ENCODE measurements at regions of chr1 and their contacts with region 1.

Region 1: GRCh38 chr1:64497088-64497883 is 27.4 kb downstream of the CACHD1 start:
- DNase-seq: no peak
- H3K4me3 ChIP-seq: peak overlapping the region in 1 of 4 experiments; percentile 44; a peak in 2 of 8 replicates
- H3K27ac ChIP-seq: peak overlapping the region; percentile 74; the same call in 1 of the 2 replicates
- H3K4me1 ChIP-seq: peaks cover 14 to 38% (median 30%) of the 10 kb centered on the region in 4 experiments
- H3K27me3 ChIP-seq: no peaks in the 10 kb centered on the region
- CTCF ChIP-seq: no peak
- EP300 ChIP-seq: no peak; a peak in 1 of 3 replicates
- POLR2A ChIP-seq: no peak
- RAD21 ChIP-seq: no peak

Region 2: DNA sequence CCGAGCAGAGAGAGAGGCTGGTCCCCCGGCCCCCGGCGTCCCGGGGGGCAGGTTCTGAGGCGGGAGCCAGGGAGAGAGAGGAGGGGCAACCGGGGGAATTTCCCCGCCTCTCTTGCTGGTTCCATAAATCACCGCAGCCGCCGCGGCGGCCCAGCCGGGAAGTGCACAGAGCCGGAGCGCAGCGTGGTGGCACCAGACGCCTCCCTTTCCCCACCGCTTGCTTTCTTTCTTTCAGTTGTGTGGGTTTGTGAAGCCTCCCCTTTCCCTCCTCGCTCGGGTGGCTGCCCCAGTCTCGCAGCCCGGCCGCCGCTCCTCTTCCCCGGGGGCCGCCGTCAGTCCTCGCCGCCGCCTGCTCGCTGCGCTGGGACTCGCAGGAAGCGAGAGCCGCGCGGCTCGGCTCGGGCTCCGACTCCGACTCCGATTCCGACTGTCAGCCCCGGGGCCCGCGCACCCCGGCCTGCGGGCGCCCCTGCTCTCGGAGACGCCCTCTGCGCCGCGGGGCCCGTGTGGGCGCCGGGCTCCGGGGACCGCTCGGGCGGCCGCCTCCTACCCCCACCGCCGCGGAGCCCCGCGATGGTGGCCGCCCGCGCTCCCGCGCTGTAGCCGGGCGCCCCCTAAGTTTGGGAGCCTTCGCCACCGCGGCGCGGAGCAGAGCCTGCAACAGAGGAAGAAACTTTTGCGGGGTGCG is 27.2 kb before region 1 on chr1 and contains the start of gene CACHD1:
- CTCF ChIA-PET with region 1: interaction called, 10 read pairs
- POLR2A ChIA-PET with region 1: interaction called, 27 read pairs
- DNase-seq: peak in 1 of 2 experiments; percentile 85
- H3K4me3 ChIP-seq: peak within 1 kb of the TSS; percentile 76 to 94 (median 90)
- H3K27ac ChIP-seq: peak within 1 kb of the TSS; percentile 39; the same call in 1 of the 2 replicates
- H3K4me1 ChIP-seq: peaks cover 9 to 20% (median 13%) of the 10 kb centered on the region in 4 experiments
- H3K27me3 ChIP-seq: peaks cover 0 to 10% (median 2%) of the 10 kb centered on the region in 4 experiments; a peak in 3 of 7 replicates
- CTCF ChIP-seq: peak in 2 of 3 experiments; percentile 1 to 15; a peak in 2 of 4 replicates
- EP300 ChIP-seq: no peak
- POLR2A ChIP-seq: peak; percentile 71 to 94
- RAD21 ChIP-seq: peak; percentile 22 to 50
- total RNA-seq, gene CACHD1: 42.5 and 44.7 TPM in 2 replicates

Region 3: GRCh38 chr1:64476251-64476952 is 20.9 kb before region 1 on chr1:
- CTCF ChIA-PET with region 1: interaction called, 11 read pairs
- POLR2A ChIA-PET with region 1: interaction called, 27 read pairs
- DNase-seq: no peak
- H3K4me3 ChIP-seq: 0 out of 8 replicates have a peak overlapping the region, but pooled peaks of 1 of the 4 experiments have one; percentile 4
- H3K27ac ChIP-seq: no peak overlapping the region
- H3K4me1 ChIP-seq: peaks cover 14 to 31% (median 25%) of the 10 kb centered on the region in 4 experiments
- H3K27me3 ChIP-seq: peaks cover 0 to 1% (median 0%) of the 10 kb centered on the region in 4 experiments; a peak in 1 of 7 replicates
- CTCF ChIP-seq: no peak
- EP300 ChIP-seq: no peak
- POLR2A ChIP-seq: no peak
- RAD21 ChIP-seq: no peak

Region 4: DNA sequence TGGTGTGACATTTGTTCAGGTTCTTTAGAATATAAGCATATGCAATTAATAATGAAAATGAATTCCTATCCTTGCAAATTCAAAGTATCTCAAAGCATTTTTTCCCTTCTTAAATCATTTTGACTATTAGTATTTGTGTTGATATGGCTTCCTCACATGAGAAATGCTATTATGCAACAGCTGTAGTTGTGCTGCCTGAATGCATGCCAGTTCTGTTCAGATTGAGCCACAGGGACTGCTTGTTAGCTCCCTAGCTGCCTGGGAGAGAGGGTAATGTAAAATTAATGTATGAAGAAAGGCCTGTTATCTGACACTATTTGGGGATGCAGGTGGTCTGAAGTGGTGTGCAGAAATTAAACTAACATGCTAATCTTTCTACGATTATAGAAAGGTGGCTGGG is 18.1 kb after region 1 on chr1:
- CTCF ChIA-PET with region 1: interaction called, 14 read pairs
- POLR2A ChIA-PET with region 1: interaction called, 5 read pairs
- DNase-seq: no peak
- H3K4me3 ChIP-seq: no peak overlapping the region
- H3K27ac ChIP-seq: no peak overlapping the region
- H3K4me1 ChIP-seq: peaks cover 4 to 34% (median 24%) of the 10 kb centered on the region in 4 experiments
- H3K27me3 ChIP-seq: peaks cover 0 to 1% (median 0%) of the 10 kb centered on the region in 4 experiments; a peak in 1 of 7 replicates
- CTCF ChIP-seq: no peak
- EP300 ChIP-seq: no peak
- POLR2A ChIP-seq: no peak
- RAD21 ChIP-seq: no peak

Measured in H1 (cell line).